Aorta (tissue), 5 donors: ENCODE measurements at regions of chr1 and their contacts with region 1.

Region 1: GRCh38 chr1:16967095-16967575 is 13.3 kb downstream of the MFAP2 start:
- DNase-seq: peak; percentile 84 to 87
- ATAC-seq: peak; percentile 16
- H3K4me3 ChIP-seq: no peak overlapping the region
- H3K27ac ChIP-seq: peak overlapping the region in 1 of 2 donors; percentile 8
- H3K4me1 ChIP-seq: no peaks in the 10 kb centered on the region
- H3K27me3 ChIP-seq: no peaks in the 10 kb centered on the region

Region 2: GRCh38 chr1:16980473-16981268 is 13.5 kb after region 1 on chr1 and contains the start of gene MFAP2:
- intact Hi-C with region 1: loop called in 1 of 2 experiments (anchors 2 kb)
- DNase-seq: no peak
- ATAC-seq: peak; percentile 38
- H3K4me3 ChIP-seq: peak within 1 kb of the TSS; percentile 48 to 73
- H3K27ac ChIP-seq: peak within 1 kb of the TSS in 1 of 2 donors; percentile 59
- H3K4me1 ChIP-seq: no peaks in the 10 kb centered on the region
- H3K27me3 ChIP-seq: no peaks in the 10 kb centered on the region
- total RNA-seq, gene MFAP2: 29.9 to 65.3 TPM

Region 3: GRCh38 chr1:17027403-17027802 is 60.3 kb after region 1 on chr1:
- intact Hi-C with region 1: no loop called
- DNase-seq: no peak
- ATAC-seq: no peak
- H3K4me3 ChIP-seq: no peak overlapping the region
- H3K27ac ChIP-seq: no peak overlapping the region
- H3K4me1 ChIP-seq: no peaks in the 10 kb centered on the region
- H3K27me3 ChIP-seq: no peaks in the 10 kb centered on the region

Region 4: GRCh38 chr1:17141441-17142197 is 174.5 kb after region 1 on chr1:
- intact Hi-C with region 1: no loop called
- DNase-seq: no peak
- ATAC-seq: no peak
- H3K4me3 ChIP-seq: no peak overlapping the region
- H3K27ac ChIP-seq: no peak overlapping the region
- H3K4me1 ChIP-seq: no peaks in the 10 kb centered on the region
- H3K27me3 ChIP-seq: no peaks in the 10 kb centered on the region